H1 (cell line): ENCODE measurements at regions of chr11 and their contacts with region 1.

Region 1: GRCh38 chr11:18650859-18651557 is 16.9 kb upstream of the SPTY2D1 start:
- DNase-seq: peak; percentile 31 to 66
- H3K4me3 ChIP-seq: peak overlapping the region in 1 of 4 experiments; percentile 12; a peak in 1 of 8 replicates
- H3K27ac ChIP-seq: no peak overlapping the region
- H3K4me1 ChIP-seq: no peaks in the 10 kb centered on the region
- H3K27me3 ChIP-seq: no peaks in the 10 kb centered on the region
- CTCF ChIP-seq: peak; percentile 37 to 92 (median 77)
- EP300 ChIP-seq: no peak
- POLR2A ChIP-seq: 0 out of 3 replicates have a peak, but pooled peaks of 1 of the 2 experiments have one; percentile 30
- RAD21 ChIP-seq: peak; percentile 84 to 87

Region 2: DNA sequence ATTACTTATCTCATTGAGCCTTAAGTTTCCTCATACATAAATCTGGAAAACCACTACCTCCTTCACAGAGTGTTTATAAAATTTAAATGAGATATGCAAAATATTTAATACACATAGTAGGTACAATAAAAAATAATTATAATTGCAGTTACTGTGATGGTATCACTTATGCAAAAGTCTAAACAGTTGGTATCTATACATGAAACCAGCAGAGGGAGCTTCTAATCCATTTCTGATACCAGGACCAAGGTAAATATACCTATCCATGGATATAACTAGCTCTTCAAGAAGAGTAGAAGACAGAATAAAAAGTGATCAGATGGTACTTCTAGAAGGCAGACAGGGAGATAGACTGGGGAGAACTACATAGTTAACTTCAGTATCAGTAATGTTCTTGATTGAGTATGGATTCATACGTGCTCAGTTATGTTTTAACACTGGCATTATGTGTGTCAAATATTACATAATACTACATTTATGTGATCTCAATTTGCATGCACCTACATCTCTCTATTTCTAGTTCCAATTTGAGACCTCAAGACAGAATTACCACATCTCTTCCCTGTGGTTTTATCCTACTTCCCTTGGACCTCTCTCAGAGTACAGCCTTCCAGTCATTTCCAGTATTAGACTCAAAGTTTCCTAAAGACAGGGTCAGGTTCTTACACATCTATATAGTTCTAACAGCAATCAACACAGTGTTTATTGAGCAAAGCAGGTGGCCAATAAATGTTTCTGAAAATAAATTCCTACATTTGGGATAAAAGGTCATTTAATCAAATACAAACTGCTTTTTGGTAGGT is 110.6 kb before region 1 on chr11:
- CTCF ChIA-PET with region 1: interaction called, 30 read pairs
- POLR2A ChIA-PET with region 1: no interaction called
- DNase-seq: no peak
- H3K4me3 ChIP-seq: no peak overlapping the region
- H3K27ac ChIP-seq: no peak overlapping the region
- H3K4me1 ChIP-seq: no peaks in the 10 kb centered on the region
- H3K27me3 ChIP-seq: no peaks in the 10 kb centered on the region
- CTCF ChIP-seq: peak in 1 of 3 experiments; percentile 16; a peak in 1 of 4 replicates
- EP300 ChIP-seq: no peak
- POLR2A ChIP-seq: no peak
- RAD21 ChIP-seq: peak; percentile 48 to 55